ENCODE measurements at regions of chr14 and their contacts with region 1.

Region 1: DNA sequence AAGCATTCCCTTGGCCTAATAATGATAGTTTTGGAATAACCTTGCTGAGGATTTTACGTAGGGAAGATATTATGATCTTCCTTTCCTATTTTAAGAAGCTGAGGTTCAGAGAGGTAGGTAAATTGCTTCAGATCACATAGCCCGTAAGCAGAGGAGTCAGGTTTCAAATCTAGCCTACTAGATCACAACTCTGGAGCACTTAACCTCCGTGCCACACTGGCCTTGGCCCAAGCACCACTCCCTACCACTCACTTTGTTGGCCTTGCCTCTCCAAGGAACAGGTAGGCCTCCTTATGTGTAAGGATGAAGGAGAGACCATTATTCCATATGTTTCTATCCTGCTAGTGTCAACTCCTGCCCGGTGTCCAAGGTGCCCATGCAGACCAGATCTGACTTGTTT is 12.4 kb upstream of the ACOT1 start:
- DNase-seq: no peak
- H3K4me3 ChIP-seq: no peak overlapping the region
- H3K27ac ChIP-seq: no peak overlapping the region
- H3K4me1 ChIP-seq: no peaks in the 10 kb centered on the region
- CTCF ChIP-seq: no peak

Region 2: GRCh38 chr14:73568381-73568781 is 43.9 kb after region 1 on chr14:
- CTCF ChIA-PET with region 1: no interaction called
- POLR2A ChIA-PET with region 1: no interaction called
- intact Hi-C with region 1: loop called (anchors 5 kb)
- DNase-seq: no peak
- H3K4me3 ChIP-seq: peak overlapping the region; percentile 73
- H3K27ac ChIP-seq: no peak overlapping the region
- H3K4me1 ChIP-seq: peaks cover 18% of the 10 kb centered on the region
- CTCF ChIP-seq: no peak

Region 3: DNA sequence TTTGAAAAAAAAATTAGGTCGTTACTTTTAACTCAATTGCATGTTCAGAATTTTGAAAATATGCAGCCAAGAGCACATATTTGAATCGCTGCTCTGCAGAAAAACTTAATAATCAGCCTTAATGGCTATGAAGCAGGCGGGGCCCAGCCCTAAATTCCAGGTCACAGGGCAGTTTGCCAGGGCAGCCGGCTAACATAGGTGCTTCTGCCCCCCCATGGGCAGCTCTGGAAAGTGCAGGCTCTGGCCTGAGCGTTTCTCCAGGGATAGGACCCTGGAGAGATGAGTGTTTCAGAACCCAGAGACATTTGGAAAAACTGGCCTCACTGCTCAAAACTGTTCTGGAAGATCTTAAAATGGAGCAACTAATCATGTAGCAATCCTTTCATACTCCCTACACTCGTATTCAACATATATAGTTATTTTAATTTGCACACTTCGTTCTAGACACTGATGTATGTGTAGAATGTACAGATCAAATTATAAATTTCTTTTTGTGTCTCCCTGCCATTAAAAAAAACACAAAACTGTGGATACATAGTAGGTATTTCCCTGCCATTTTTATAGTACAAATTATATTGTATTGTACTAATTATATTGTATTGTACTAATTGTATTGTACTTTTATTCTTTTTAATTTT is 301.2 kb after region 1 on chr14:
- CTCF ChIA-PET with region 1: no interaction called
- POLR2A ChIA-PET with region 1: no interaction called
- intact Hi-C with region 1: no loop called
- DNase-seq: peak; percentile 86
- H3K4me3 ChIP-seq: no peak overlapping the region
- H3K27ac ChIP-seq: no peak overlapping the region
- H3K4me1 ChIP-seq: peaks cover 5% of the 10 kb centered on the region
- CTCF ChIP-seq: peak; percentile 96

Measured in OCI-LY7 (cell line).